ENCODE measurements at regions of chr12 and their contacts with region 1.

Region 1: GRCh38 chr12:65306366-65307168 is 28.1 kb downstream of the MSRB3 start:
- ATAC-seq: peak; percentile 52 to 99 (median 74)
- H3K4me3 ChIP-seq: no peak overlapping the region
- H3K27ac ChIP-seq: peak overlapping the region in 1 of 2 donors; percentile 41
- H3K4me1 ChIP-seq: peaks cover 3 to 5% of the 10 kb centered on the region in 2 donors

Region 2: GRCh38 chr12:64826234-64826633 is 480.3 kb before region 1 on chr12:
- in situ Hi-C with region 1: no loop called
- ATAC-seq: peak in 6 of 8 experiments; percentile 6 to 69 (median 20)
- H3K4me3 ChIP-seq: peak overlapping the region; percentile 45 to 78 (median 55)
- H3K27ac ChIP-seq: peak overlapping the region in 1 of 2 donors; percentile 68
- H3K4me1 ChIP-seq: peaks cover 4 to 8% of the 10 kb centered on the region in 2 donors

Region 3: DNA sequence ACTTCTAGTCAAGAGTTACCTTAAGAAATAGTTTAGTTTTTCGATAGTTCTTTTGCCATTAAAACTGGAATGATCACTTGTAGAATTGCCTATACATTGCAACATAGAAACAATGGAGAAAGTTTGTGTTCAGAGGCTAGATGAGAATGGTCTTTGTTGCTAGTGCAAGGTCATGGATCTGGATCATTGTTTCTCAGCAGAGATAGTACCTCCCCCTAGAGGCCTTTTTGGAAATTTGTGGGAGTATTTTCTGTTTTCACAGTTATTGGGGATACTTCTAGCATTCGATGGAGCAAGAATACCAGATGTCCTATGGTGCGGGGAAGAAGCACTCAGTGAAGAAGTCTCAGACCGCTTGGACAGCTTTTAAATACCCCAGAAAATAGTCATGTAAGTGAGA is 378.9 kb after region 1 on chr12:
- in situ Hi-C with region 1: loop called in 1 of 9 experiments (anchors 25 kb)
- ATAC-seq: peak in 3 of 8 experiments; percentile 30 to 60 (median 60)
- H3K4me3 ChIP-seq: no peak overlapping the region
- H3K27ac ChIP-seq: no peak overlapping the region
- H3K4me1 ChIP-seq: no peaks in the 10 kb centered on the region

Region 4: GRCh38 chr12:65720136-65721130 is 413.9 kb after region 1 on chr12:
- in situ Hi-C with region 1: loop called in 1 of 9 experiments (anchors 25 kb)
- ATAC-seq: peak in 3 of 8 experiments; percentile 24 to 79 (median 76)
- H3K4me3 ChIP-seq: no peak overlapping the region
- H3K27ac ChIP-seq: no peak overlapping the region
- H3K4me1 ChIP-seq: peaks cover 0 to 3% of the 10 kb centered on the region in 2 donors

Region 5: GRCh38 chr12:66087365-66087943 is 780.9 kb after region 1 on chr12:
- in situ Hi-C with region 1: loop called in 3 of 9 experiments (anchors 25 kb)
- ATAC-seq: peak in 5 of 8 experiments; percentile 30 to 77 (median 74)
- H3K4me3 ChIP-seq: no peak overlapping the region
- H3K27ac ChIP-seq: no peak overlapping the region
- H3K4me1 ChIP-seq: no peaks in the 10 kb centered on the region

Region 6: GRCh38 chr12:66107451-66107915 is 800.9 kb after region 1 on chr12:
- in situ Hi-C with region 1: loop called in 3 of 9 experiments (anchors 25 kb)
- ATAC-seq: peak in 7 of 8 experiments; percentile 28 to 87 (median 76)
- H3K4me3 ChIP-seq: no peak overlapping the region
- H3K27ac ChIP-seq: no peak overlapping the region
- H3K4me1 ChIP-seq: no peaks in the 10 kb centered on the region

Measured in motor neuron (in vitro differentiated cells).